ENCODE measurements at regions of chr10 and their contacts with region 1.

Region 1: DNA sequence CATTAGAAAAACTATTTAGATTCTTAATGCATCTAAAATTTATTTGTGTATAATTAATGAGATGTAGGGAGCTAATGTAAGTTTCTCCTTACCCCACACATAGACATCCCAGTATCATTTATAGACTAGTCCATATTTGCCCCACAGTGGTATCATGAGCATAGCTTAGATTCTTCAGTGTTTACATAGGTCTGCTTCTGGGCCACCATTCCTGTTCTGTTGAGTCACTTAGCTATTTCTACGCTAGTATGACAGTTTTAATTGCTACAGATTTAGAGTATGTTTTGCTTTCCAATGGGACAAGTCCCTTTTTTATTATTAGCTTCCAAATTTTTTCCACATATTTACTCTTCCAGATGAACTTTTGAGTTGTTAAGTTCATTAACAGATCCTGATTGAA is 69.4 kb downstream of the MCMBP start:
- DNase-seq: no peak
- H3K4me3 Mint-ChIP-seq: no peak overlapping the region
- H3K27ac Mint-ChIP-seq: no peak overlapping the region
- H3K4me1 Mint-ChIP-seq: peaks cover 20% of the 10 kb centered on the region
- H3K27me3 Mint-ChIP-seq: no peaks in the 10 kb centered on the region

Region 2: DNA sequence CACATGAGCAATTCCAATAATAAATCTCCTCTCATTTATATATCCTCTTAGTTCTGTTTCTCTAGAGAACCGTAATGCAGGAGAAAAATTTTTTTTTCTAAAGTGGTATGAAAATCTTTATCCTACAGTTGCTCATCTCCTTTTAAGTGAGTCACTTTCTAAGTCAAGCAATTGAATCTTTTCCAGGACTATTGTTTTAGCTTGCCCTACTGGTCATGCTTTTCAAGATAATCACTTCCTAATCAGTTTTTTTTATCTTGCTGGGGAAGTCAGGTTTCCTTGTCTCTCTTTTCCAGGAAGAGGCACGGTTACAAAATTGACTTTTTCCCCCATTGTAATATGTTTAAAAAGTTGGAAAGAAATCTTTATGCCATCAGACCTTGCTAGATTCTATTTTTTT is 33.4 kb before region 1 on chr10:
- intact Hi-C with region 1: loop called (anchors 5 kb)
- DNase-seq: no peak
- H3K4me3 Mint-ChIP-seq: no peak overlapping the region
- H3K27ac Mint-ChIP-seq: no peak overlapping the region
- H3K4me1 Mint-ChIP-seq: no peaks in the 10 kb centered on the region
- H3K27me3 Mint-ChIP-seq: no peaks in the 10 kb centered on the region

Region 3: GRCh38 chr10:119947300-119947699 is 144.0 kb after region 1 on chr10:
- intact Hi-C with region 1: no loop called
- DNase-seq: no peak
- H3K4me3 Mint-ChIP-seq: no peak overlapping the region
- H3K27ac Mint-ChIP-seq: no peak overlapping the region
- H3K4me1 Mint-ChIP-seq: no peaks in the 10 kb centered on the region
- H3K27me3 Mint-ChIP-seq: no peaks in the 10 kb centered on the region

Region 4: DNA sequence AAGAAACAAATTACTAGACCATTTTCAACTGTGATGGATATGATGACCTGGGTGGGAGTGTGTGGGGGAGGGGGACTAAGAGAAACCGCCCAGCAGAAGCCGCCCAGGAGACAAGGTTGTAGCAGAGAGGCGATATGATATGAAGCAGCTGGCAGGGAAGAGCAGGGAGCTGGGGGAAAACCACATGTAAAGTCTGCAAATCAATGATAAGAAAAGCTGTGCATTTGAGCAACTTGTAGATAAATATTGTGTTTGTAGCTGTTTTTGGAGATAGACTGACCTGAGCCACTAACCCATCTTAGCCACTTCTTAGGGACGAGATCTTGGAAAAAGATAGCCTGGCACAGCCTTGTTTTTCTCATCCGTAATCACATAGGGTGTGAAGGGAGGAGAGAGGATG is 341.8 kb after region 1 on chr10:
- intact Hi-C with region 1: no loop called
- DNase-seq: no peak
- H3K4me3 Mint-ChIP-seq: no peak overlapping the region
- H3K27ac Mint-ChIP-seq: no peak overlapping the region
- H3K4me1 Mint-ChIP-seq: no peaks in the 10 kb centered on the region
- H3K27me3 Mint-ChIP-seq: no peaks in the 10 kb centered on the region